Adrenal gland (tissue), 19 donors: ENCODE measurements at regions of chr2 and their contacts with region 1.

Region 1: GRCh38 chr2:172806493-172806892 is 70.8 kb downstream of the RAPGEF4 start:
- DNase-seq: peak in 2 of 7 donors; percentile 31 to 35
- H3K4me3 ChIP-seq: no peak overlapping the region
- H3K27ac ChIP-seq: no peak overlapping the region
- H3K4me1 ChIP-seq: no peaks in the 10 kb centered on the region
- H3K27me3 ChIP-seq: no peaks in the 10 kb centered on the region
- CTCF ChIP-seq: peak; percentile 76 to 92 (median 85)
- POLR2A ChIP-seq: no peak

Region 2: GRCh38 chr2:172772633-172773032 is 33.9 kb before region 1 on chr2:
- intact Hi-C with region 1: no loop called
- DNase-seq: peak in 2 of 7 donors; percentile 15 to 18
- H3K4me3 ChIP-seq: no peak overlapping the region
- H3K27ac ChIP-seq: no peak overlapping the region
- H3K4me1 ChIP-seq: no peaks in the 10 kb centered on the region
- H3K27me3 ChIP-seq: no peaks in the 10 kb centered on the region
- CTCF ChIP-seq: no peak
- POLR2A ChIP-seq: no peak

Region 3: GRCh38 chr2:172944022-172944793 is 137.7 kb after region 1 on chr2:
- intact Hi-C with region 1: no loop called
- DNase-seq: no peak
- H3K4me3 ChIP-seq: no peak overlapping the region
- H3K27ac ChIP-seq: no peak overlapping the region
- H3K4me1 ChIP-seq: peaks cover 19 to 29% of the 10 kb centered on the region in 2 donors
- H3K27me3 ChIP-seq: no peaks in the 10 kb centered on the region
- CTCF ChIP-seq: no peak
- POLR2A ChIP-seq: no peak

Region 4: GRCh38 chr2:173027181-173028128 is 221.0 kb after region 1 on chr2:
- intact Hi-C with region 1: loop called (anchors 10 kb)
- DNase-seq: peak; percentile 80 to 97 (median 91)
- H3K4me3 ChIP-seq: no peak overlapping the region
- H3K27ac ChIP-seq: peak overlapping the region in 2 of 5 donors; percentile 22 to 42
- H3K4me1 ChIP-seq: peaks cover 0 to 5% of the 10 kb centered on the region in 2 donors
- H3K27me3 ChIP-seq: no peaks in the 10 kb centered on the region
- CTCF ChIP-seq: peak; percentile 95 to 97 (median 95)
- POLR2A ChIP-seq: no peak

Region 5: GRCh38 chr2:173199294-173199693 is 392.8 kb after region 1 on chr2:
- intact Hi-C with region 1: no loop called
- DNase-seq: no peak
- H3K4me3 ChIP-seq: no peak overlapping the region
- H3K27ac ChIP-seq: peak overlapping the region in 4 of 5 donors; percentile 14 to 59 (median 40)
- H3K4me1 ChIP-seq: peaks cover 0 to 9% of the 10 kb centered on the region in 2 donors
- H3K27me3 ChIP-seq: no peaks in the 10 kb centered on the region
- CTCF ChIP-seq: no peak
- POLR2A ChIP-seq: no peak

Region 6: GRCh38 chr2:173210270-173211196 is 404.0 kb after region 1 on chr2:
- intact Hi-C with region 1: loop called (anchors 5 to 10 kb)
- DNase-seq: peak; percentile 77 to 92 (median 85)
- H3K4me3 ChIP-seq: peak overlapping the region in 1 of 4 donors; percentile 8
- H3K27ac ChIP-seq: peak overlapping the region in 2 of 5 donors; percentile 11 to 48
- H3K4me1 ChIP-seq: peaks cover 4 to 7% of the 10 kb centered on the region in 2 donors
- H3K27me3 ChIP-seq: no peaks in the 10 kb centered on the region
- CTCF ChIP-seq: peak; percentile 67 to 97 (median 95)
- POLR2A ChIP-seq: peak in 1 of 2 donors; percentile 6